PC-9 (cell line): ENCODE measurements at regions of chr12 and their contacts with region 1.

Region 1: GRCh38 chr12:111741235-111741812 is 25.4 kb upstream of the ALDH2 start:
- DNase-seq: no peak
- H3K4me3 ChIP-seq: no peak overlapping the region
- H3K27ac ChIP-seq: no peak overlapping the region
- H3K4me1 ChIP-seq: no peaks in the 10 kb centered on the region
- H3K27me3 ChIP-seq: no peaks in the 10 kb centered on the region
- CTCF ChIP-seq: no peak

Region 2: GRCh38 chr12:111424793-111425251 is 316.5 kb before region 1 on chr12:
- CTCF ChIA-PET with region 1: no interaction called
- POLR2A ChIA-PET with region 1: no interaction called
- intact Hi-C with region 1: no loop called
- DNase-seq: no peak
- H3K4me3 ChIP-seq: no peak overlapping the region
- H3K27ac ChIP-seq: peak overlapping the region; percentile 80
- H3K4me1 ChIP-seq: peaks cover 29% of the 10 kb centered on the region
- H3K27me3 ChIP-seq: no peaks in the 10 kb centered on the region
- CTCF ChIP-seq: peak; percentile 47; the same call in 1 of the 2 replicates

Region 3: DNA sequence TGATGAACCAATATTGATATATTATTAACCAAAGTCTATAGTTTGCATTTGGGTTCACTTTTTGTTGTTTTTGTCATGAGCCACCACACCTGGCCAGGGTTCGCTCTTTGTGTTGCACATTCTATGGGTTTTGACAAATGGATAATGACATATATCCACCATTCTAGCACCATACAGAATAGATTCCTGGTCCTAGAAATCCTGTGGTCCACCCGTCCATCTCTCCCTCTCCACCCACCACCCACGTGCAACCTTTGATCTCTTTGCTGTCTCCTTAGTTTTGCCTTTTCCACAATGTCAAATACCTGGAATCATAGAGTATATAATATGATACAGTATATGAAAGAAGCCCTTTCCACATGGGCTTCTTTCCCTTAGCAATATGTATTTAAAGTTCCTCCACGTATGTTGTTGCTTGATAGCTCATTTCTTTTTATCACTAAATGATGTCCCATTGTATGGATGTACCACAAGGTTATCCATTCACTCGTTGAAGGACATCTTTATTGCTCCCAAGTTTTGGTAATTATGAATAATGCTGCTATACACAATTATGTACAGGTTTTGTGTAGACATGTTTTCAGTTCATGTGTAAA is 660.7 kb after region 1 on chr12:
- CTCF ChIA-PET with region 1: no interaction called
- POLR2A ChIA-PET with region 1: interaction called, 12 read pairs
- intact Hi-C with region 1: no loop called
- DNase-seq: no peak
- H3K4me3 ChIP-seq: no peak overlapping the region
- H3K27ac ChIP-seq: no peak overlapping the region
- H3K4me1 ChIP-seq: peaks cover 2% of the 10 kb centered on the region
- H3K27me3 ChIP-seq: no peaks in the 10 kb centered on the region
- CTCF ChIP-seq: no peak